ENCODE measurements at regions of chr16 and their contacts with region 1.

Region 1: DNA sequence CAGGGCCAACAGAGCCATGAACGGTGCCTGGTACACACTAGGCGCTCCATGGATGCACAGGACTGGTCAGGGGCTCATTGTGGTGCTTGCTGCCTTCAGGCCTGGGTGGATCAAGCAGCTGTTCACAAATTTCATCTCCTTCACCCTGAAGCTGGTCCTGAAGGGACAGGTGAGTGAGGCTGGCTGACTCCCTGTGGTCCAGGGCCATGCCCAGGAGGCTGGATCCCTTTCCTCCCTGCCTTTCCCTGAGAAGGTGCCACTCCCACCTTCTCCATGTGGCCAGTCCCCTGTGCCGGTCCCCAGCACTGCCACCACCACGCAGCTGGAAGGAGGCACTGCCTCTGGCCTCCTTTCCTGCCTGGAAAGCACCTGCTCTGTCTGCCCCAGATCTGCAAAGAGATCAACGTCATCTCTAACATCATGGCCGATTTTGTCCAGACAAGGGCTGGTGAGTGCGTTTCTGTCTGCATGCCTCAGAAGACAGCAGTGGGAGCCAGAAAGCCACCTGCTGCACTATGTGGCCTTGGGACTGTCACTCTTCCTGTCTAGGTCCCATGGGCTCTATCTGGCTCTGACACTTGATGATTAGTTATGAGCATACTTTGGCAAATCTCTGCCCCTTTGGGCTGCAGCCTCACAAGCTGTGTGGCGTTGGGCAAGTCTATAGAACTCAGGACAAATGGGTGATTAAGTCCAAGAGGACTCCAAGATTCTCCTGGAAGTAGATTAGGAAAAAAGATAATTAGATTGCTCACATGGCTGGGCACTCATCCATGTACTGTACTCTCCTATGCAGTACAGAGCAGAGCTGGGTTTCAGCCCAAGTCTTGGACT is 9.4 kb downstream of the CETP start:
- DNase-seq: peak; percentile 53
- ATAC-seq: peak; percentile 96
- H3K4me3 Mint-ChIP-seq: peak overlapping the region; percentile 66
- H3K27ac Mint-ChIP-seq: peak overlapping the region; percentile 97
- H3K4me1 Mint-ChIP-seq: peaks cover 66% of the 10 kb centered on the region
- H3K27me3 Mint-ChIP-seq: no peaks in the 10 kb centered on the region
- CTCF ChIP-seq: no peak

Region 2: GRCh38 chr16:56994311-56994710 is 23.2 kb after region 1 on chr16:
- CTCF ChIA-PET with region 1: interaction called, 11 read pairs
- POLR2A ChIA-PET with region 1: interaction called, 233 read pairs
- intact Hi-C with region 1: no loop called
- DNase-seq: no peak
- ATAC-seq: no peak
- H3K4me3 Mint-ChIP-seq: peak overlapping the region; percentile 2
- H3K27ac Mint-ChIP-seq: peak overlapping the region; percentile 30
- H3K4me1 Mint-ChIP-seq: peaks cover 79% of the 10 kb centered on the region
- H3K27me3 Mint-ChIP-seq: no peaks in the 10 kb centered on the region
- CTCF ChIP-seq: no peak

Region 3: GRCh38 chr16:57000271-57001025 is 29.3 kb after region 1 on chr16:
- CTCF ChIA-PET with region 1: interaction called, 11 read pairs
- POLR2A ChIA-PET with region 1: interaction called, 33 read pairs
- intact Hi-C with region 1: loop called (anchors 2 kb)
- DNase-seq: peak; percentile 40
- ATAC-seq: peak; percentile 72
- H3K4me3 Mint-ChIP-seq: peak overlapping the region; percentile 55
- H3K27ac Mint-ChIP-seq: peak overlapping the region; percentile 90
- H3K4me1 Mint-ChIP-seq: peaks cover 87% of the 10 kb centered on the region
- H3K27me3 Mint-ChIP-seq: no peaks in the 10 kb centered on the region
- CTCF ChIP-seq: no peak